ENCODE measurements at regions of chr6 and their contacts with region 1.

Region 1: DNA sequence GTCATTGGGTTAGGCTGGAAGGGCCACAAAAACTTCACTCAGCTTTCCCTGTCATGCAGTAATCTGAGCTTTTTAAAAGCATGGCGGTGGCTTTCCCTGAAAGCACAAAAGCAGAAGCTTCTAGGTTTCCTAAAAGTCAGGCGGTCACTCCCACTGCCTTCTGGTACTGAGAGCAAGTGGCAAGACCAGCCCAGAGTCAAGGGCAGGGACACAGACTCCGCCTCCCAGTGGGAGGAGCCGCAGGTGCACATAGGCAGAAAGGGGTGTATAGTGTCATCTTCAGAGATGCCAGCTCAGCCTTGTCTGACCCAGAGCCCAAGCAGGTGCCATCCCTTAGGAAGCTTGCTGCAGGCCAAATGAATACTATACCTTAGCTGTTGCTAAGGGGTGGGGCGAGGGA is 18.0 kb upstream of the PACSIN1 start:
- DNase-seq: no peak
- ATAC-seq: no peak
- H3K4me3 ChIP-seq: no peak overlapping the region
- H3K27ac ChIP-seq: no peak overlapping the region
- H3K4me1 ChIP-seq: no peaks in the 10 kb centered on the region
- H3K27me3 ChIP-seq: no peaks in the 10 kb centered on the region
- CTCF ChIP-seq: no peak

Region 2: DNA sequence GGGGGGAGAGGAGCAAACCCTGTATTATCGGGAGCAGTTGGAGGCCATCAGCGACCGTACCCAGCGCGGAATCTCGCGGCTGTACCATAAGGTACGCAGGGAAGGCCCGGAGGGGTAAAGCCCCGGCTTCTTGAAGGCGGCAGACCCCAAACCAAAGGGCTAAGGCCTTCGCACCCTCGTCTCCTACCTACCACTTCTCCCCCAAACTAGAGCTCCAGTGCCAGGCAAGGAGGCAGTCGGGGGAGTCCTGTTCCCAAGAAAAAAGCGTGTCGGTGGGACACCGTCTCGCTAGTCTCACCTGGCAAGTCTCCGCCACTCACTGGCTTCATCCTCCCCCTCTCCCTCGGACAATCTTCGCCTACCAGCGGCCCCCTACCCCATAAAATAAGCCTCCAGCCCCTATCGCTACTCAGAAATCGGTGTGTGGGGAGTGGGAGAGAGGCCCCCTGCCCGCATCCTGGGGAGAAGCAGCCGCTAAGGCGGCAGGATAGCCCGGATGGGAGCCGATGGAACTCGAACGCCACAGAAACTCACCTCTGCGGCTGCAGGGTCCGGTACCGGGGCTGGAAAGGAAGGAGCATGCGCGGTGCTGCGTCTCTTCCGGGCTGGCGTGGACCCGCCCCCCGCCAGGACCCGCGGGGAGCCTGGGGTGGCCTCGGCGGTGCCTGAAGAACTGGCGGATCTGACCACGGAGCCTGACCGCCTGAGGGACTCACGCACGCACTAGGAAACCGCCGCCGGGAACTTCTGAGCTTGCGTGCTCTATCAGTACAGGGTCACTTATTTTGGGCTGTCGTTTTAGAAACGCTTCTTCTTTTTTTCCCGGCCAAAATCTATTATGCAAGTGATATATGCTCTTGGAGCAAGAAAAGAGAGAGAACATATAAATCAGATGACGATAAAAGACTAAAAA is 22.2 kb before region 1 on chr6 and contains the start of gene RPS10:
- CTCF ChIA-PET with region 1: no interaction called
- POLR2A ChIA-PET with region 1: interaction called, 11 read pairs
- in situ Hi-C with region 1: no loop called
- intact Hi-C with region 1: no loop called
- DNase-seq: peak; percentile 60
- ATAC-seq: peak; percentile 97
- H3K4me3 ChIP-seq: peak within 1 kb of the TSS; percentile 95 to 100
- H3K27ac ChIP-seq: peak within 1 kb of the TSS; percentile 97
- H3K4me1 ChIP-seq: peaks cover 10% of the 10 kb centered on the region
- H3K27me3 ChIP-seq: no peaks in the 10 kb centered on the region
- CTCF ChIP-seq: no peak
- total RNA-seq, gene RPS10: 1,363 TPM

Region 3: GRCh38 chr6:34496103-34496685 is 48.3 kb after region 1 on chr6:
- CTCF ChIA-PET with region 1: no interaction called
- POLR2A ChIA-PET with region 1: no interaction called
- in situ Hi-C with region 1: no loop called
- intact Hi-C with region 1: no loop called
- DNase-seq: no peak
- ATAC-seq: no peak
- H3K4me3 ChIP-seq: no peak overlapping the region
- H3K27ac ChIP-seq: no peak overlapping the region
- H3K4me1 ChIP-seq: no peaks in the 10 kb centered on the region
- H3K27me3 ChIP-seq: no peaks in the 10 kb centered on the region
- CTCF ChIP-seq: no peak

Region 4: DNA sequence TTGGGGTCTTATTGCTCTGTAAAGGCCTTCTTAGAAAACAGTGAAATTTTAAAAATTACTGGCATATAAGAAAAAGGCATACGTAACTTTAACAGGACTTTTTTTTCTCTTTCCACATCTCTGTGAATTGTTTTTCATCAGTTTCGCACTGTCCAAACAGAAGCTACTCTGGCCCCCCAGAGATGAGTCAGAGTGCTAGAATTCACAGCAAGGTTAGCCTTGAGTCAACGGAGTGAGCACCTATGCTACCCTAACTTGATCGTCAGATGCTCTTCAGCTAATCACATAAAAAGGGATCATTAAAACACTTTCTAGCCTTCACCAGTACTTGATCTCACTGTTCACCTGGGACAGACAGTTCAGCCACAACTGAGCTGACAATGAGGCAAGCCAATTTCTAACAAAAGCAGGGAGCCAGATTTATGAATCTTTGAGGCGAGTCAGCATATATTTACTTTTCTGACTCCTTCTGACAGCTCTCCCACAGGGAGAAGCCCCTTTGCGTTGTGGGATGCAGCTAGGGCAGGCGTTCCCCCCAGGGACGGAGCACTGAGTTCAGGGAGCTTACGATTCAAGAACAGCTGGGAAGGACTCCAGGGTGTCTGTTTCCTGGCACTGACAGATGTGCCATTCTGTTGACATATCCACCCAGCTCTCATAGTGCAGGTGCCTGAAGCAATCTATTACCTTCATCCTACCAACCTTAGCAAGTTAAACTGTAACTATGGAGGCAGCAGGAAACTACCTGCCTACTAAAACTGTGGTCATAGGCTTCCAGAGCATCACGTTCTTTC is 154.6 kb after region 1 on chr6:
- CTCF ChIA-PET with region 1: no interaction called
- POLR2A ChIA-PET with region 1: no interaction called
- in situ Hi-C with region 1: loop called (anchors 10 kb)
- intact Hi-C with region 1: no loop called
- DNase-seq: no peak
- ATAC-seq: no peak
- H3K4me3 ChIP-seq: no peak overlapping the region
- H3K27ac ChIP-seq: peak overlapping the region; percentile 52
- H3K4me1 ChIP-seq: peaks cover 20% of the 10 kb centered on the region
- H3K27me3 ChIP-seq: no peaks in the 10 kb centered on the region
- CTCF ChIP-seq: no peak

Measured in Panc1 (cell line).